Activated CD4-positive, alpha-beta memory T cell treated with anti-CD3 and anti-CD28 coated beads for 36 hours (primary cell): ENCODE measurements at regions of chr19 and their contacts with region 1.

Region 1: GRCh38 chr19:2455851-2456570 is 748 bp downstream of the LMNB2 start:
- DNase-seq: peak; percentile 62
- H3K4me3 Mint-ChIP-seq: peak overlapping the region; percentile 83
- H3K27ac Mint-ChIP-seq: peak overlapping the region; percentile 82
- H3K4me1 Mint-ChIP-seq: peaks cover 18% of the 10 kb centered on the region
- H3K27me3 Mint-ChIP-seq: no peaks in the 10 kb centered on the region

Region 2: GRCh38 chr19:2168619-2169424 is 287.2 kb before region 1 on chr19:
- CTCF ChIA-PET with region 1: no interaction called
- POLR2A ChIA-PET with region 1: no interaction called
- intact Hi-C with region 1: loop called (anchors 10 kb)
- DNase-seq: peak; percentile 93
- H3K4me3 Mint-ChIP-seq: peak overlapping the region; percentile 38
- H3K27ac Mint-ChIP-seq: peak overlapping the region; percentile 84
- H3K4me1 Mint-ChIP-seq: peaks cover 68% of the 10 kb centered on the region
- H3K27me3 Mint-ChIP-seq: no peaks in the 10 kb centered on the region